Psoas muscle (tissue), 8 donors: ENCODE measurements at regions of chr9 and their contacts with region 1.

Region 1: GRCh38 chr9:131334629-131335367 is 45.3 kb downstream of the PLPP7 start:
- DNase-seq: peak; percentile 76 to 94
- ATAC-seq: peak; percentile 93 to 96 (median 96)
- H3K4me3 ChIP-seq: no peak overlapping the region
- H3K27ac ChIP-seq: peak overlapping the region; percentile 93
- H3K4me1 ChIP-seq: peaks cover 14% of the 10 kb centered on the region
- H3K27me3 ChIP-seq: no peaks in the 10 kb centered on the region
- CTCF ChIP-seq: no peak

Region 2: GRCh38 chr9:131056781-131057506 is 277.9 kb before region 1 on chr9:
- intact Hi-C with region 1: loop called in 1 of 2 experiments (anchors 1 kb)
- DNase-seq: no peak
- ATAC-seq: no peak
- H3K4me3 ChIP-seq: no peak overlapping the region
- H3K27ac ChIP-seq: no peak overlapping the region
- H3K4me1 ChIP-seq: no peaks in the 10 kb centered on the region
- H3K27me3 ChIP-seq: peaks cover 0 to 16% (median 0%) of the 10 kb centered on the region in 3 donors
- CTCF ChIP-seq: no peak

Region 3: DNA sequence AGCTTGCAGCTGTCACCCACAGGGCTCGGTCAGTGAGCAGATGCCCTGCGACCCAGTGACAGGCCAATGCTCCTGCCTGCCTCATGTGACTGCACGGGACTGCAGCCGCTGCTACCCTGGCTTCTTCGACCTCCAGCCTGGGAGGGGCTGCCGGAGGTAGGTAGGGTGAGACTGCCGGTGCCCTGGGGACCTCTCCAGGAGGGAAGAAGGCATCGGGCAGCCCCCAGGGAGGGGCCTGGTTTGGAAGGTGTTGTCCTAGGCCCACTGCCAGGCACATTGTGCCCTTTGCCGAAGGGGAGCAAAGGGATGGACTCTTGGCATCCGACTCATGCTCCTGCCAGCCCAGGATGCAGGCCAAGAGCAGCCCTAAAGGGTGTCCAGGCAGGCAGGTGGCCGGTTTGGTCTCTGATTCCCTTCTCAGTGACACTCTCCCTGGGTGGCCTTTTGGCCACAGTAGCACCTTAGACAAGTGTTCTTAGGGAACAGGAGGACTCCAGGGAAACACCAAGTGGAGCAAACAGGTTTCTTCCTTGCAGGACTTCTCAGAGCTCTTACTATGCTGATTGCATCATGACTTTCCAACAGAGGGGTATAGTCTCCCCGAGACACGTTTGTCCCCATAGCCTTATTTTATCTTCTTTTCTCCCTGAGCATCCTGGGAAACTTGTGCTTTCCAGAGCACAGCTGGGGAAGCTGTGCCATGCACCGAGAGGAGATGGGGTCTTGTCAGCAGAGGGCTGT is 266.6 kb before region 1 on chr9:
- intact Hi-C with region 1: loop called in 1 of 2 experiments (anchors 5 kb)
- DNase-seq: no peak
- ATAC-seq: peak in 2 of 4 donors; percentile 34 to 38
- H3K4me3 ChIP-seq: no peak overlapping the region
- H3K27ac ChIP-seq: no peak overlapping the region
- H3K4me1 ChIP-seq: peaks cover 9% of the 10 kb centered on the region
- H3K27me3 ChIP-seq: peaks cover 0 to 39% (median 4%) of the 10 kb centered on the region in 3 donors
- CTCF ChIP-seq: no peak

Region 4: GRCh38 chr9:131178382-131178781 is 156.4 kb before region 1 on chr9:
- intact Hi-C with region 1: loop called (anchors 1 kb)
- DNase-seq: peak; percentile 63 to 82
- ATAC-seq: peak; percentile 91 to 97 (median 93)
- H3K4me3 ChIP-seq: no peak overlapping the region
- H3K27ac ChIP-seq: no peak overlapping the region
- H3K4me1 ChIP-seq: peaks cover 28% of the 10 kb centered on the region
- H3K27me3 ChIP-seq: no peaks in the 10 kb centered on the region
- CTCF ChIP-seq: peak; percentile 96

Region 5: GRCh38 chr9:131237931-131238401 is 96.8 kb before region 1 on chr9:
- intact Hi-C with region 1: loop called (anchors 5 to 10 kb)
- DNase-seq: peak; percentile 59 to 82
- ATAC-seq: peak; percentile 66 to 75 (median 72)
- H3K4me3 ChIP-seq: peak overlapping the region; percentile 15
- H3K27ac ChIP-seq: peak overlapping the region; percentile 66
- H3K4me1 ChIP-seq: peaks cover 27% of the 10 kb centered on the region
- H3K27me3 ChIP-seq: no peaks in the 10 kb centered on the region
- CTCF ChIP-seq: no peak

Region 6: GRCh38 chr9:131255676-131256197 is 79.1 kb before region 1 on chr9:
- intact Hi-C with region 1: loop called in 1 of 2 experiments (anchors 5 kb)
- DNase-seq: no peak
- ATAC-seq: peak; percentile 4 to 69 (median 28)
- H3K4me3 ChIP-seq: no peak overlapping the region
- H3K27ac ChIP-seq: peak overlapping the region; percentile 89
- H3K4me1 ChIP-seq: peaks cover 47% of the 10 kb centered on the region
- H3K27me3 ChIP-seq: no peaks in the 10 kb centered on the region
- CTCF ChIP-seq: no peak

Region 7: GRCh38 chr9:131297903-131298302 is 36.9 kb before region 1 on chr9:
- intact Hi-C with region 1: loop called in 1 of 2 experiments (anchors 5 kb)
- DNase-seq: peak in 1 of 2 donors; percentile 66
- ATAC-seq: peak; percentile 14 to 66 (median 60)
- H3K4me3 ChIP-seq: no peak overlapping the region
- H3K27ac ChIP-seq: peak overlapping the region; percentile 91
- H3K4me1 ChIP-seq: peaks cover 58% of the 10 kb centered on the region
- H3K27me3 ChIP-seq: no peaks in the 10 kb centered on the region
- CTCF ChIP-seq: no peak